Esophagus muscularis mucosa (tissue), 4 donors: ENCODE measurements at regions of chr2 and their contacts with region 1.

Region 1: GRCh38 chr2:189466660-189467059 is 25.4 kb downstream of the WDR75 start:
- DNase-seq: no peak
- H3K4me3 ChIP-seq: no peak overlapping the region
- H3K27ac ChIP-seq: no peak overlapping the region
- H3K4me1 ChIP-seq: no peaks in the 10 kb centered on the region
- H3K27me3 ChIP-seq: no peaks in the 10 kb centered on the region
- CTCF ChIP-seq: peak; percentile 52 to 70 (median 57)
- EP300 ChIP-seq: no peak
- POLR2A ChIP-seq: no peak

Region 2: DNA sequence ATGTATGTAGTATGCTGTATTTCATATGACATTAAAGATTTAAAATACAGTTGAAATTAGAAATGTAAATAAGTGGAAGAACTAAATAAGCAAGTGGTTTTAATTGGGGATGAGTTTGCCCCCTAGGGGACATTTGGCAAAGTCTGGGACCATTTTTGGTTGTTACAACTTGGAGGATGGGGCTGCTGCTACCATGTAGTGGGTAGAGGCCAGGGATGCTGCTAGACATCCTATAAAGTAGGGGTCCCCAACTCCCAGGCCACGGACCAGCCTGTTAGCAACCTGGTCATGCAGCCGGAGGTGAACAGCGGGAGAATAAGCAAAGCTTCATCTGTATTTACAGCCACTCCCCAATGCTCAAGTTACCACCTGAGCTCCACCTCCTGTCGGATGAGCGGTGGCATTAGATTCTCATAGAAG is 166.7 kb after region 1 on chr2:
- intact Hi-C with region 1: loop called (anchors 5 kb)
- DNase-seq: no peak
- H3K4me3 ChIP-seq: no peak overlapping the region
- H3K27ac ChIP-seq: no peak overlapping the region
- H3K4me1 ChIP-seq: no peaks in the 10 kb centered on the region
- H3K27me3 ChIP-seq: no peaks in the 10 kb centered on the region
- CTCF ChIP-seq: peak in 2 of 3 experiments; percentile 29 to 44
- EP300 ChIP-seq: no peak
- POLR2A ChIP-seq: no peak